ENCODE measurements at regions of chr17 and their contacts with region 1.

Region 1: DNA sequence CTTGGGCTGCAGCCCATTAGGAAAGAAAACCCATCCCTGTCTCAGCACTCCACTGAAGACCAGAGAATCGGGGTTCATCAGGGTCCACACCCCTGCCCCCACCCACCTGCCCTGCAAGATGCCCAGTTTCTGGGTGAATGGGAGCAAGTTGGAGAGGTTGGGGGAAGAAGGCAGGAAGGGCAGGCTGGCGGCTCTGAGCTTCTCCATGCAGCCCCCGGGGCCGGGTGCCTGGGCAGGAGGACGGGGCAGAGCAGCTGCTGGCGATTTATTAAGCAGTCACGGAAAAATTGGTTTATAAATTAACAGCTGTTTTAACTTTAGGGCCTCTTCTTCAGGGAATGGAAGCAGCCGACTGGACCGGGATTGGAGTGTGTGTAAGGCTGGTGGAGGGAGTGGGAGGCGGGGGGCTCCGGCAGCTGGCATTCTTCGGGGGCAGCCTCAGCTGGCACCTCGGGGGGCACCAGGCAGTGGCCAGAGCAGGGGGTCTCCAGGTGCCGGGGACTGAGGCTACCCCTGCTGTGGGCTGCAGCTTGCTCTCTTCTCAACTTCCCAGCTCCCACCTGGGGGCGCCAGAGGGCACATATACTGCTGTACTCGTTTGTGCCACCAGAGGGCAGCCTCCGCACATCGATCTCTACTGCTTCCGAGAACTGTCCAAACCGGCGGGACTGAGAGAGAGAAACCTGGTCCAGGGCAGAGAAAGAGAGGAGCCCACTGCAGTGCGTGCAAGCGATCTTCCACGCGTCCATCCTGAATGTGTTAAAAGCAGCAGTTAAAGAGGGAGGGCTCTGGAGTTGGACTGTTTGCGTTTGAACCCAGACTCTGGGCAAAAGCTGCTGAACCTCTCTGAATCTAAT is 5.0 kb upstream of the PPP1R1B start:
- DNase-seq: peak; percentile 91
- ATAC-seq: peak; percentile 68
- H3K4me3 Mint-ChIP-seq: peak overlapping the region; percentile 77
- H3K27ac Mint-ChIP-seq: peak overlapping the region; percentile 98
- H3K4me1 Mint-ChIP-seq: peaks cover 23% of the 10 kb centered on the region
- H3K27me3 Mint-ChIP-seq: peaks cover 39% of the 10 kb centered on the region

Region 2: DNA sequence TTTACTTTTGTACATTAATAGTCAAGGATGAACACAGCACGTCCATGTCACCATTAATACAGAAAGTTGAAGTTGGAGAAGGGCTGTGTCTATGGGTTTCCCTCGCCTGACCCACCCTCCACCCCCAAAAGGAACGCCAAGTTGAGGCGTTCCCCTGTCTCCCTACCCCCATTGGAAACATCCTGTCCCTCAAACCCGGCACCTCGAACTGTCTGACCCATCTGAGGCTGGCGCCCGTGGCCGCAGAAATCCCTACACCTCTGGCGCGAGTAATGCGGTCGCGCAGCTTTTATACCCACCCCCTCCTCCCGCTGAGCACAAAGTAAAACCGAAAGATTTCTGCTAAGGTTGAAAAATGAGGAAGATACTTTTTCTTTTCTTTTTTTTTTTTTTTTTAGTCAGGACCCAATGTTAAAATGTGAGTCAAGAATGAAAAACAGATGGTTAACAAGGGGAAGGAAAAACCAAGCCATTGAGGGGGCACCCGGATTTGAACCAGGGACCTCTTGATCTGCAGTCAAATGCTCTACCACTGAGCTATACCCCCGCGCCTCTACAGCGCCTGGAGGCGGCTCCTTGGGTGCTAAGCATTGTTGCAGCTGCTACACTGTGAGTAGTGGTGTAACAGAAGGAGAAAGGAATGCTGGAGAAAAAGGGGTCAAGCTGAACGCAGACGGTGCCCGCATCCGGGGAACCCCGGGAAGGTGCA is 752.8 kb before region 1 on chr17:
- CTCF ChIA-PET with region 1: no interaction called
- DNase-seq: peak; percentile 93
- ATAC-seq: peak; percentile 51
- H3K4me3 Mint-ChIP-seq: peak overlapping the region; percentile 88
- H3K27ac Mint-ChIP-seq: peak overlapping the region; percentile 92
- H3K4me1 Mint-ChIP-seq: peaks cover 44% of the 10 kb centered on the region
- H3K27me3 Mint-ChIP-seq: peaks cover 2% of the 10 kb centered on the region

Region 3: DNA sequence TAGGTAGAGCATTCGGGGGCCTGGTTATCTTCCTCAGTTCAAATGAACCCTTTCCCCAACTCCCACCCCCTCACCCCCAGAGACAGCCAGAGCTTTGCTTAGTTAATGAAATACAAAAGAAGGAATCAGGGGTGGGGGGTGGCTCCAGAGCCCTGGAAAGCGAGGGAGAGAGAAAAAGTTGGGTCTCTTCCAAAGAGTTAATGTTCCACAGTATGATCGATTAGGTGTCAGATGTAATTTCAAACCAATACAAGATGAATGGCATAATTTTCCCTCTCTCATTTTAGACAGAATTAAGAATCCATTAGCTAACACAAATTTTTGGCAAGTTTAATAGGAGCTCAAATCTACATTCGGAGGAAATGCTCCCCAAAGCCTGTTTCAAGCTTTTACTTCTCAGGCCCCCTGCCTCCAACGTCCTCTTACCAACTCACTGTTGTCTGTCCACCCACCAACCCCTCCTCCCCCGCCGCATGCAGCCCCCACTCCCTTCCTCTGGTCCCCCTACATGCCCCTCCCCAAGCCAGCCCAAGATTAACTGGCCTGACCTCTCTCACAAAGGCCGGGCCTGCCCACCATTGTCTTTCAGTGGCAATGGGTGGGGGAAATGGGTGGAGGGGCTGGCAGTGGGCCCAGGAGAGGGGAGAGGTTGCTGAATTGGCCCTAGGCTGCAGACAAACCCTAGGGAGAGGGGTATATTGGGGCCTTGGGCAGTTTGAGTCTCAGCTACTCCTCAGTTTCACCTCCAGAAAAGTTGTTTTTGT is 42.3 kb before region 1 on chr17:
- CTCF ChIA-PET with region 1: interaction called, 21 read pairs
- DNase-seq: no peak
- ATAC-seq: no peak
- H3K4me3 Mint-ChIP-seq: no peak overlapping the region
- H3K27ac Mint-ChIP-seq: no peak overlapping the region
- H3K4me1 Mint-ChIP-seq: no peaks in the 10 kb centered on the region
- H3K27me3 Mint-ChIP-seq: peaks cover 8% of the 10 kb centered on the region

Region 4: GRCh38 chr17:39605492-39606433 is 16.0 kb before region 1 on chr17:
- CTCF ChIA-PET with region 1: interaction called, 29 read pairs
- DNase-seq: no peak
- ATAC-seq: peak; percentile 47
- H3K4me3 Mint-ChIP-seq: no peak overlapping the region
- H3K27ac Mint-ChIP-seq: no peak overlapping the region
- H3K4me1 Mint-ChIP-seq: peaks cover 14% of the 10 kb centered on the region
- H3K27me3 Mint-ChIP-seq: peaks cover 79% of the 10 kb centered on the region

Region 5: DNA sequence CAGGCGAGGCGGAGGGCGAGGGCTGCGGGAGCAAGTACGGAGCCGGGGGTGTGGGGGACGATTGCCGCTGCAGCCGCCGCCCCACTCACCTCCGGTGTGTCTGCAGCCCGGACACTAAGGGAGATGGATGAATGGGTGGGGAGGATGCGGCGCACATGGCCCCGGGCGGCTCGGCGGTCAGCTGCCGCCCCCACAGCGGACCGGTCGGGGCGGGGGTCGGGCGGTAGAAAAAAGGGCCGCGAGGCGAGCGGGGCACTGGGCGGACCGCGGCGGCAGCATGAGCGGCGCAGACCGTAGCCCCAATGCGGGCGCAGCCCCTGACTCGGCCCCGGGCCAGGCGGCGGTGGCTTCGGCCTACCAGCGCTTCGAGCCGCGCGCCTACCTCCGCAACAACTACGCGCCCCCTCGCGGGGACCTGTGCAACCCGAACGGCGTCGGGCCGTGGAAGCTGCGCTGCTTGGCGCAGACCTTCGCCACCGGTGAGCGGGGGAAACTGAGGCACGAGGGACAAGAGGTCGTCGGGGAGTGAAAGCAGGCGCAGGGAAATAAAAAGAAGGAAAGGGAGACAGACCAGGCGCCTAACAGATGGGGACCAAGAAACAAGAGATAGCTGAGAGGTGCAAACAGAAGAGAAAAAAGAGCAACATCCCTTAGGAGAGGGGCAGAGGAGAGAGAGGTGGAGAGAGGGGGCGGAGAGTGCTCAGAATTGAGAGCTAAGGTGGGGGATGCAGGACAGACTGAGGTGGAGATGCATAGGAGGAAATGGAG is 46.6 kb after region 1 on chr17 and contains the start of gene PNMT:
- CTCF ChIA-PET with region 1: interaction called, 227 read pairs
- DNase-seq: peak; percentile 74
- ATAC-seq: peak; percentile 85
- H3K4me3 Mint-ChIP-seq: peak within 1 kb of the TSS; percentile 30
- H3K27ac Mint-ChIP-seq: no peak within 1 kb of the TSS
- H3K4me1 Mint-ChIP-seq: peaks cover 11% of the 10 kb centered on the region
- H3K27me3 Mint-ChIP-seq: peaks cover 30% of the 10 kb centered on the region
- total RNA-seq, gene PNMT: not detected

Region 6: GRCh38 chr17:39754161-39754951 is 132.6 kb after region 1 on chr17:
- CTCF ChIA-PET with region 1: interaction called, 36 read pairs
- DNase-seq: peak; percentile 98
- ATAC-seq: peak; percentile 87
- H3K4me3 Mint-ChIP-seq: peak overlapping the region; percentile 78
- H3K27ac Mint-ChIP-seq: peak overlapping the region; percentile 91
- H3K4me1 Mint-ChIP-seq: peaks cover 62% of the 10 kb centered on the region
- H3K27me3 Mint-ChIP-seq: no peaks in the 10 kb centered on the region

Region 7: DNA sequence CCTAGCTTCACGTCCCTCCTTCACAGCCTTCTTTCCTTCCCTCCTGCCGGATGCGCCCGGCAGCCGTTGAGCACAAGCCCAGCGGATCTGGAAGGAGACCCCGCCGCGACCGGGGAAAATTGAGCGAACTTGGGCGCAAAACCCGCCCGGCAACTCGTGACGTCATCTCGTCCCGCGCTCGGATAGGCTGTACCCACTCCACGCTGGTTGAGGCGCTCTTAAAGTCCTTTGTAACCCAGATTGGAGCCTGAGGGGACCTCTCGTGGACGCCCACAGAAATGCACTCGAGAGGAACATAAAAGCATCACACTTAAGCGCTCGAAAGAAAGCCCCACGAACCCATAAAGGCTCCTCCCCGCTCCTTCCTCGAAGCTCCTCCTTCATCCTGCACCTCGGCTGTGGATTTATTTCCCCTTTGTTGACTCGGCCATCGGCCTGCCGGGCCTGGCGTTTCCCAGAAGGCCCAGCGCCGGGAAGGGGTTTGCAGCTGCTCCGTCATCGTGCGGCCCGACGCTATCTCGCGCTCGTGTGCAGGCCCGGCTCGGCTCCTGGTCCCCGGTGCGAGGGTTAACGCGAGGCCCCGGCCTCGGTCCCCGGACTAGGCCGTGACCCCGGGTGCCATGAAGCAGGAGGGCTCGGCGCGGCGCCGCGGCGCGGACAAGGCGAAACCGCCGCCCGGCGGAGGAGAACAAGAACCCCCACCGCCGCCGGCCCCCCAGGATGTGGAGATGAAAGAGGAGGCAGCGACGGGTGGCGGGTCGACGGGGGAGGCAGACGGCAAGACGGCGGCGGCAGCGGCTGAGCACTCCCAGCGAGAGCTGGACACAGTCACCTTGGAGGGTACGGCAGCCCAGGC is 358.8 kb after region 1 on chr17 and contains the start of gene PSMD3:
- CTCF ChIA-PET with region 1: interaction called, 28 read pairs
- DNase-seq: peak; percentile 99
- ATAC-seq: peak; percentile 96
- H3K4me3 Mint-ChIP-seq: peak within 1 kb of the TSS; percentile 97
- H3K27ac Mint-ChIP-seq: peak within 1 kb of the TSS; percentile 88
- H3K4me1 Mint-ChIP-seq: peaks cover 34% of the 10 kb centered on the region
- H3K27me3 Mint-ChIP-seq: peaks cover 14% of the 10 kb centered on the region
- total RNA-seq, gene PSMD3: 106 to 138 TPM

Region 8: GRCh38 chr17:40157973-40158372 is 536.2 kb after region 1 on chr17:
- CTCF ChIA-PET with region 1: no interaction called
- DNase-seq: no peak
- ATAC-seq: no peak
- H3K4me3 Mint-ChIP-seq: no peak overlapping the region
- H3K27ac Mint-ChIP-seq: peak overlapping the region; percentile 8
- H3K4me1 Mint-ChIP-seq: peaks cover 22% of the 10 kb centered on the region
- H3K27me3 Mint-ChIP-seq: no peaks in the 10 kb centered on the region